Activated CD8-positive, alpha-beta T cell treated with anti-CD3 and anti-CD28 coated beads for 36 hours (primary cell): ENCODE measurements at regions of chr4 and their contacts with region 1.

Region 1: DNA sequence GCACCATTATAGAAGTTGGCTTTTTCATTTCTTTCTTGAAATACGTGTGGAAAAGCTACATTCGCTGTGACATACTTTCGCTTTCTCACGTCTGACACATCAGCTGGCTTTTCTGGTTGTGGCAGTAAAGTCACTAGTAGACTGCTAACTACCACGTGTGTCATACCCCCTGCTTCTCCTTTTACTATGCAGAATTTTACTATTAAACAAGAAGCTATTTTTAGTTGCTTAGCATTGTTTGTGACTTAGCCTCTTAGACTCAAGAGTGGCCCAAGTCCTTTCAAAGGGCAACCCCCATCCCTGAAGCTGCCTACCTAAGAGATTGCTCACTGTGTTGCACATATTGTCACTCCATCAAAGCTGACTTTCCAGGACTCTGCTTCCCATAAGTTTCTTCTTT is 2.1 kb upstream of the IL2 start:
- DNase-seq: peak; percentile 70
- ATAC-seq: peak; percentile 85
- H3K4me3 Mint-ChIP-seq: peak overlapping the region; percentile 69
- H3K27ac Mint-ChIP-seq: peak overlapping the region; percentile 85
- H3K4me1 Mint-ChIP-seq: peaks cover 48% of the 10 kb centered on the region
- H3K27me3 Mint-ChIP-seq: no peaks in the 10 kb centered on the region
- CTCF ChIP-seq: no peak

Region 2: GRCh38 chr4:122309988-122310626 is 148.5 kb before region 1 on chr4:
- CTCF ChIA-PET with region 1: no interaction called
- POLR2A ChIA-PET with region 1: no interaction called
- intact Hi-C with region 1: loop called (anchors 10 kb)
- DNase-seq: no peak
- ATAC-seq: no peak
- H3K4me3 Mint-ChIP-seq: no peak overlapping the region
- H3K27ac Mint-ChIP-seq: no peak overlapping the region
- H3K4me1 Mint-ChIP-seq: no peaks in the 10 kb centered on the region
- H3K27me3 Mint-ChIP-seq: no peaks in the 10 kb centered on the region
- CTCF ChIP-seq: peak; percentile 65

Region 3: DNA sequence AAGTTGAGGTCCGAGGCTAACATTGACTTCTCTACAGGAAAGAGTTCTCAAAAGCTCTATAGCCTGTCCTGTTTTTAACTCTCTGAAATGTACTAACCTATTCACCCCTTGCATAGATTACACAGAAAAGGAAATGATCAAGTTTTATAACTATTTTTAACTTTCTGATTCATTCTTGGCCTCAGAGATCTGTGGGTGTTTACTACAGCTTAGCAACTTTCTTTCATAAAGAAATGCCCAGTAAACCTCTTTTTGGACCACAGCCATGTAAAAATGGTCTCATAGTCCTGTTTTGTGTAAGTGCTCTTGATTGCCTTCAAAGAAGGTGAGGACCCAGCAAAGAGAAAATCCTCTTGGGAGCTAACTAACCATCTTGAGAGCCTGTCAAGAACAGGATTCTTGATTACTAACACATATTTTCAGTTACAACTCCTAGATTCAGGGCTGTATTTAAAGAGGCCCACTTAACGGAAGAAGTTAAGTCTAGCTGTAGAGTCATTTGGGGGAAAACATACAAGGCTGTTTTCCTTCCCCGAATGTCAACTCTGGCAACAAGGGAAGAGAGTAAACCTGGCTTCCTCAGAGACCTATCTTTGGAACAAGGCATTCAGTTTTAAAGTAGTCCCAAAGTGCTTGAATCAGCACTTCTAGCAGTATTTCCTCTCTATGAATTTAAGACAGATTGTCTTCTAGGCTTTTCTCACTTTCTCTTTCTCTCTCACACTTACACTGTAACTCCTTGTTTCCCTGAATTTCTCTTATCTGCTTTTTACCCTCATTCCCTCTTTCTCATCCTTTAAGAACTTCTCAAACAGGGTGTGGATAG is 84.0 kb after region 1 on chr4:
- CTCF ChIA-PET with region 1: interaction called, 3 read pairs
- POLR2A ChIA-PET with region 1: interaction called, 5 read pairs
- intact Hi-C with region 1: loop called (anchors 5 kb)
- DNase-seq: no peak
- ATAC-seq: peak; percentile 67
- H3K4me3 Mint-ChIP-seq: peak overlapping the region; percentile 40
- H3K27ac Mint-ChIP-seq: peak overlapping the region; percentile 93
- H3K4me1 Mint-ChIP-seq: peaks cover 64% of the 10 kb centered on the region
- H3K27me3 Mint-ChIP-seq: no peaks in the 10 kb centered on the region
- CTCF ChIP-seq: no peak